ENCODE measurements at regions of chr6 and their contacts with region 1.

Region 1: DNA sequence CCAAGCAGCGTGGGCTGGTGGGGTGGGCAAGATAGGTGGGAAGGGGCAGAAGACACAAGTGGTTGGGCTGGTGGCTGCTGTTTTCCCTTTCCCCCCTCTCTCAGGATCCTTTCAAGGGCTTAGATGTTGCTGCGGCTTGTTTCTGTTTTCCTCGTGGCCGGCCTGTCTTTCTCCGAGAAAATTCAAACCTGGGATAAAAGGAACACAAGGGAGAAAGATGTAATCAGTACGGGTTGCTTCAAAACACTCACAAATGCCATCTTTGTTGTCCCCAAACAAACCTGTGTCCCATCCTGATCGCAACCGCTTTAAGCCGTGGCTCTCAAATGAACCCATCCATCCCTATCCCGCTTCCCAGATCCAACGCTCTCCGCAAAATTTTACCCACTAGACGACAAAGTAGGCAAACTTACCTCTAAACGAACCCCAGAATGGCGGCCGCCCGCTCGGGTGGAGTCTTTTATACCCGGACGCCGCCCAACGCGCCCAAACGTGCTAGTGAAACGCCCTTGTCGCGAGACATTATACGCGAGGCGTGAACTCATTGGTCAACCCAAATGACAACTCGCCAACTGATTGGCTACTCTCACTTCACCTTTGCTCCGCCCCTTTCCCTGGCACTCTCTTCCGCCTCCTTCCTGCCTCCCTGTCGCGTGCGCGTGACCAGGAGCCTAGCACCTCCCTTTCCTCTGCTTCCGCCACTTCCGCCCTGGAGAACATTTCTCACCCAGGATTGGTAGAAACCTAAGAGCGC is at the start of gene PPP1R10:
- DNase-seq: peak; percentile 100
- ATAC-seq: peak; percentile 90
- H3K4me3 ChIP-seq: peak within 1 kb of the TSS; percentile 71 to 98
- H3K27ac ChIP-seq: peak within 1 kb of the TSS; percentile 100
- H3K4me1 ChIP-seq: peaks cover 32% of the 10 kb centered on the region
- H3K27me3 ChIP-seq: no peaks in the 10 kb centered on the region
- CTCF ChIP-seq: no peak
- total RNA-seq, gene PPP1R10: 82.9 TPM

Region 2: GRCh38 chr6:28824793-28825731 is 1791.9 kb before region 1 on chr6:
- CTCF ChIA-PET with region 1: no interaction called
- POLR2A ChIA-PET with region 1: interaction called, 18 read pairs
- in situ Hi-C with region 1: no loop called
- intact Hi-C with region 1: no loop called
- DNase-seq: no peak
- ATAC-seq: no peak
- H3K4me3 ChIP-seq: peak overlapping the region; percentile 26 to 47
- H3K27ac ChIP-seq: no peak overlapping the region
- H3K4me1 ChIP-seq: 0 out of 2 replicates have a peak, but pooled peaks cover 2% of the 10 kb centered on the region
- H3K27me3 ChIP-seq: peaks cover 22% of the 10 kb centered on the region
- CTCF ChIP-seq: no peak

Region 3: GRCh38 chr6:30489081-30490025 is 127.6 kb before region 1 on chr6 and contains the start of gene HLA-E:
- CTCF ChIA-PET with region 1: interaction called, 11 read pairs
- POLR2A ChIA-PET with region 1: no interaction called
- in situ Hi-C with region 1: no loop called
- intact Hi-C with region 1: no loop called
- DNase-seq: peak; percentile 92
- ATAC-seq: peak; percentile 96
- H3K4me3 ChIP-seq: peak within 1 kb of the TSS; percentile 80 to 96
- H3K27ac ChIP-seq: peak within 1 kb of the TSS; percentile 86
- H3K4me1 ChIP-seq: peaks cover 7% of the 10 kb centered on the region
- H3K27me3 ChIP-seq: no peaks in the 10 kb centered on the region
- CTCF ChIP-seq: no peak
- total RNA-seq, gene HLA-E: 132 TPM

Region 4: GRCh38 chr6:30656513-30656912 is 39.5 kb after region 1 on chr6:
- CTCF ChIA-PET with region 1: no interaction called
- POLR2A ChIA-PET with region 1: no interaction called
- in situ Hi-C with region 1: no loop called
- intact Hi-C with region 1: no loop called
- DNase-seq: no peak
- ATAC-seq: no peak
- H3K4me3 ChIP-seq: no peak overlapping the region
- H3K27ac ChIP-seq: no peak overlapping the region
- H3K4me1 ChIP-seq: no peaks in the 10 kb centered on the region
- H3K27me3 ChIP-seq: no peaks in the 10 kb centered on the region
- CTCF ChIP-seq: no peak

Measured in Panc1 (cell line).